ENCODE measurements at regions of chr1 and their contacts with region 1.

Region 1: GRCh38 chr1:178031856-178032320 is 62.0 kb upstream of the RASAL2 start:
- DNase-seq: peak; percentile 86
- ATAC-seq: peak; percentile 70

Region 2: GRCh38 chr1:178282949-178283367 is 251.1 kb after region 1 on chr1:
- intact Hi-C with region 1: loop called (anchors 2 kb)
- DNase-seq: no peak
- ATAC-seq: no peak